ENCODE measurements at regions of chr5 and their contacts with region 1.

Region 1: GRCh38 chr5:90916947-90917800 is 358.6 kb downstream of the ADGRV1 start:
- DNase-seq: no peak
- CTCF ChIP-seq: no peak

Region 2: DNA sequence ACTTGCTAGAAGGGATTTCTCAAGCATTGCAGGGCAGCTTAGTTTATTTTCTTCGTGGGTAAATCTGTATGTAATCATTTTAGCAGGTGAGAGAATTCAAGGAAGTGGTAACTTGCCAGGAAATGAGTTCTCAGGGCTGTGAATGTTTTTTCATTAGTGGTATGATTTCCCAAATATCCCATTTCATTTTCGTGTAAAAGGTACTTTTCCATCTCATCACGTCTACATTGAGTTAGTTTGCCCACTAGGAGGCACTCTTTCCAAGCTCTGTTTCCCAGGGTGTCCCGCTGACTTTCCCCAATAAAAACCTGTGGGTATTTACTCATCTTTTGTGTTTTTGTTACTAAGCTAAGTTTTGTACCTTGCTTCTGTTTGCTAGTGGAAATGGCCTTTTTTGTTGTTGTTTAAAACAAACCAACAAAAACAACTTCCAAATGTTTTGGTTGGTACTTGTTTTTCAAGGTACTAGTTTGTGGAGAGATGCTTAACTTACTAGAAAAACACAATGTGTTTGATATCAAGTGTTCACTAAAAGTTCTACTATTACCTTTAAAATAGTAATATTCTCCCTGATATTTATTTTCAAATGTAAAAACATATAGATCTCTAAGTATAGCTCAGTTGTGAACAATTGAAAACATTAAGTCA is 15.0 kb after region 1 on chr5:
- CTCF ChIA-PET with region 1: interaction called, 27 read pairs
- POLR2A ChIA-PET with region 1: no interaction called
- DNase-seq: peak; percentile 56
- CTCF ChIP-seq: peak; percentile 76

Measured in GM10248 (cell line).